Activated CD4-positive, alpha-beta T cell treated with anti-CD3 and anti-CD28 coated beads, Interleukin-2, amount 10 ng/mL, durations not matched to agents 7 days and 5 days (primary cell): ENCODE measurements at regions of chr3 and their contacts with region 1.

Region 1: GRCh38 chr3:148173851-148174250 is 523.9 kb upstream of the AGTR1 start:
- DNase-seq: no peak
- H3K4me3 Mint-ChIP-seq: no peak overlapping the region
- H3K27ac Mint-ChIP-seq: no peak overlapping the region
- H3K4me1 Mint-ChIP-seq: no peaks in the 10 kb centered on the region
- H3K27me3 Mint-ChIP-seq: no peaks in the 10 kb centered on the region

Region 2: GRCh38 chr3:146529021-146529420 is 1644.8 kb before region 1 on chr3:
- CTCF ChIA-PET with region 1: no interaction called
- POLR2A ChIA-PET with region 1: interaction called, 11 read pairs
- DNase-seq: no peak
- H3K4me3 Mint-ChIP-seq: no peak overlapping the region
- H3K27ac Mint-ChIP-seq: peak overlapping the region; percentile 9
- H3K4me1 Mint-ChIP-seq: peaks cover 24% of the 10 kb centered on the region
- H3K27me3 Mint-ChIP-seq: no peaks in the 10 kb centered on the region

Region 3: GRCh38 chr3:148101061-148101460 is 72.8 kb before region 1 on chr3:
- CTCF ChIA-PET with region 1: no interaction called
- POLR2A ChIA-PET with region 1: no interaction called
- DNase-seq: no peak
- H3K4me3 Mint-ChIP-seq: no peak overlapping the region
- H3K27ac Mint-ChIP-seq: no peak overlapping the region
- H3K4me1 Mint-ChIP-seq: no peaks in the 10 kb centered on the region
- H3K27me3 Mint-ChIP-seq: no peaks in the 10 kb centered on the region